ENCODE measurements at regions of chr18 and their contacts with region 1.

Region 1: DNA sequence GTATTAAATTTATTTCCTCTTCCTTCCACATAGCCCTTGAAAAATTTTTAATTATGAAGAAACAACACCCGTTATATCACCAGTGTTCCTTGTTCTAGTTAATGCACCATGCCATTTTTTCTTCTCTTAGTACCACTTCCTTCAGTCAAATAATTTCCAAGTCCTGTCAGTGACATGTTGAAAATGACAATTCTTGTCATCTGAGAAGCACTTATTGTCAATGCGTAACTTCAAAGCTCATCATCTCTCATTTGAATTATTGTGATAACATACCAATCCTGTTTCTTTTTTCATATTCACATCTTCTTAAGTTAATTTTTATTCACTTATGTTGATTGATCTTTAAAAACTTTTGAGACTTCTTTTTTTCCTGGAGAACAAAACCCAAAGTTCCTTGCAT is 320.4 kb downstream of the ASXL3 start:
- DNase-seq: no peak
- H3K4me3 ChIP-seq: no peak overlapping the region
- H3K27ac ChIP-seq: no peak overlapping the region
- H3K4me1 ChIP-seq: no peaks in the 10 kb centered on the region
- H3K27me3 ChIP-seq: no peaks in the 10 kb centered on the region
- CTCF ChIP-seq: no peak
- EP300 ChIP-seq: no peak
- POLR2A ChIP-seq: no peak

Region 2: GRCh38 chr18:33051407-33051806 is 847.0 kb before region 1 on chr18:
- in situ Hi-C with region 1: no loop called
- intact Hi-C with region 1: loop called (anchors 10 kb)
- DNase-seq: no peak
- H3K4me3 ChIP-seq: no peak overlapping the region
- H3K27ac ChIP-seq: no peak overlapping the region
- H3K4me1 ChIP-seq: no peaks in the 10 kb centered on the region
- H3K27me3 ChIP-seq: no peaks in the 10 kb centered on the region
- CTCF ChIP-seq: no peak
- EP300 ChIP-seq: no peak
- POLR2A ChIP-seq: no peak

Region 3: GRCh38 chr18:33711514-33711913 is 186.9 kb before region 1 on chr18:
- in situ Hi-C with region 1: no loop called
- intact Hi-C with region 1: no loop called
- DNase-seq: no peak
- H3K4me3 ChIP-seq: no peak overlapping the region
- H3K27ac ChIP-seq: no peak overlapping the region
- H3K4me1 ChIP-seq: no peaks in the 10 kb centered on the region
- H3K27me3 ChIP-seq: no peaks in the 10 kb centered on the region
- CTCF ChIP-seq: no peak
- EP300 ChIP-seq: no peak
- POLR2A ChIP-seq: no peak

Measured in transverse colon (tissue), 4 donors.